Activated T-helper 1 cell treated with anti-CD3 and anti-CD28 coated beads, Interleukin-12 subunit alpha, Interleukin-12 subunit beta, Interleukin-2, Interleukin-4 antibody, amounts not matched to agents 30 ng/mL and 10 ng/mL and 1 ng/mL, durations not matched to agents 14 hours and 24 hours and 36 hours (primary cell): ENCODE measurements at regions of chr11 and their contacts with region 1.

Region 1: DNA sequence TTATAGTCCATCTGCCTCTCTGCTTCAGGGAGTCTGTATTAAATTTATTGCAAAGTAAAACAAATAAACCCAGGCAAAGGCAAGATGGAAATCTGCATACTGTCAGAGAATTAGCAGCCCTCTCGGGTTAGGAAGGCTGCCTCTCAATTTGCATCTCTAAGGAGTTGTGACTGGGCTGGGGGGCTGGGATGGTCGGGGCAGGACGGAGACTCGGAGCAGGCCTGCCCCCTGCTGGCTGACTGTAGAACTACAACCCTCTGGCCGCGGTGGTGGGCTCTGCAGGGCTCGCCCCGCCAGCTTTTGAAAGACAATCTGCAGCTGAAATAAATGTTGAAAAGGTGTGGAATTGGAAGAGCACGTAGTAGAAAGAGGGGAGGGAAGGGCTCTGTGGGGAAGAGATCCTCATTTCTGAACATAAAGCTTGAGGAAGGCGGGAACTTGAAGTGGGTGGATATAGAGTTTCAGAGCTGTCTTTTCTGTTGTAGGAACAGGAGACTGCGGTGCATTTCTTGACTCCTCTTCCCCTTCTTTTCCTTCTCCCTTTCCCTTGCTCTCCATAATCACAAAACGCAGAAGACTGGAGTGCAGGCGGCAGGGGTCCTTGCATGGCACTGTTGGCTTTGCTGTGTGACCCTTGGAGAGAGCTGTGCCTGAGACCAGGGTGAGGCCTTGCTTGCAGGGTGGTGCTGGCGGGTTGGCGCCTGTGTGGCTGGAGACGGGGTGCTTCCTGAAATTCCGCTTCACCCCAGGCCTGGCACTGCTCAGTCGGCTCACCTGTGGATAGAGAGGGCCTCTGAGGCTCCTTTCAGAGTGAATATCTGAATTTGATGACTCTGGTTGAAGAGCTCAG is 22.6 kb upstream of the PKNOX2 start:
- DNase-seq: peak; percentile 23
- H3K4me3 Mint-ChIP-seq: no peak overlapping the region
- H3K27ac Mint-ChIP-seq: no peak overlapping the region
- H3K4me1 Mint-ChIP-seq: no peaks in the 10 kb centered on the region
- H3K27me3 Mint-ChIP-seq: peaks cover 24% of the 10 kb centered on the region

Region 2: DNA sequence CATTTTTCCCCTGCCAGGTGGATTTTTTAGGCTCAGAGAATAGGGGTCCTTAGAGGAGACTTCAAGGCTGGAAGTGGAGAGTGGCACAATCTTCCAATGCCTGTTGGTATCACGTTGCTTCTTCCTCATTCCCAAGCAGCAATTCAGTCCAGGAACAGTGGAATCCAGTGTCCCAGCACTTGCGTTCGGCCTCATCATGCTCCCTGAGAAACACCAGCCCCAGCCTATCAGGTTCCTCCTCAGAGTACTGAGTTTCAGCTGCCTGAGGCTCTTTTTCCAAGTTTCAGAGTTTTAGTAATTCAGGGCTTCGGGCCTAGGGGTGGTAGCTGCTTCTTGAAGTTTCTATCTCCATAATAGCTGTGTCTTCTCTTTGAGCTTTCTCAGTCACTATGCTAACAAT is 434.1 kb before region 1 on chr11:
- intact Hi-C with region 1: no loop called
- DNase-seq: no peak
- H3K4me3 Mint-ChIP-seq: no peak overlapping the region
- H3K27ac Mint-ChIP-seq: no peak overlapping the region
- H3K4me1 Mint-ChIP-seq: no peaks in the 10 kb centered on the region
- H3K27me3 Mint-ChIP-seq: peaks cover 4% of the 10 kb centered on the region

Region 3: GRCh38 chr11:125062931-125063428 is 78.9 kb before region 1 on chr11 and contains the start of gene SLC37A2:
- intact Hi-C with region 1: loop called (anchors 2 kb)
- DNase-seq: peak; percentile 40
- H3K4me3 Mint-ChIP-seq: peak within 1 kb of the TSS; percentile 80
- H3K27ac Mint-ChIP-seq: no peak within 1 kb of the TSS
- H3K4me1 Mint-ChIP-seq: peaks cover 10% of the 10 kb centered on the region
- H3K27me3 Mint-ChIP-seq: peaks cover 44% of the 10 kb centered on the region
- total RNA-seq, gene SLC37A2: 0.13 and 0.17 TPM in 2 replicates

Region 4: DNA sequence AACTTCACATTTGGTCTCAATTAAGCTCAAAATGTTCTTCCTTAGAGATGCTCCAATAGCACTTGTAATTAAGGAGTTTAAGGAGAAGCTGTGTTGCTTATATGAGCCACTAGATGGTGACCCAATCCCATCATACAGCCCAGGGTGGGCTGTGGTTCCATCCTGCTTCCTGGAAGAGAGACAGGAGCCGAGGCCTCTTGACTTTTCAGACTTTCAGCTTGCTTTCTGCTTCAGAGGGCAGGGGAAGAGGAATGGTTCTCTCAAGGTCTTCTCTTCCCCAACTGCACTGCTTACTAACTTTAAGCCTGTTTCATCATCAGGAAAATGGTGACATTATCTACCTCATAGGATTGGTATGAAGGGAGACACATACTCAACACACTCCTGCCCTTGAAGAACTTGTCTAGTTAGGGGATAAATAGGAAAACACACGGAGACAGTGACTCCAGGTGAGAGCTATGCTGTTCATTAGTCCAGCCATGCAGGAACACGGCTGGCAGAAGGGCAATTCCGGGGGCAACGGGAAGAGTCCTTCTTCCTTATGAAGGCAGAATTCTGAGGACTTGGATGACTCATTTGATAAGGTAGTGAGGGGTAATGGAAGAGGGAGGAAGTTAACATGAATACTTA is 50.5 kb before region 1 on chr11:
- intact Hi-C with region 1: loop called (anchors 1 kb)
- DNase-seq: no peak
- H3K4me3 Mint-ChIP-seq: no peak overlapping the region
- H3K27ac Mint-ChIP-seq: no peak overlapping the region
- H3K4me1 Mint-ChIP-seq: peaks cover 5% of the 10 kb centered on the region
- H3K27me3 Mint-ChIP-seq: no peaks in the 10 kb centered on the region

Region 5: GRCh38 chr11:125345421-125346178 is 203.7 kb after region 1 on chr11:
- intact Hi-C with region 1: loop called (anchors 5 kb)
- DNase-seq: peak; percentile 9
- H3K4me3 Mint-ChIP-seq: no peak overlapping the region
- H3K27ac Mint-ChIP-seq: no peak overlapping the region
- H3K4me1 Mint-ChIP-seq: no peaks in the 10 kb centered on the region
- H3K27me3 Mint-ChIP-seq: peaks cover 8% of the 10 kb centered on the region